ENCODE measurements at regions of chr14 and their contacts with region 1.

Region 1: DNA sequence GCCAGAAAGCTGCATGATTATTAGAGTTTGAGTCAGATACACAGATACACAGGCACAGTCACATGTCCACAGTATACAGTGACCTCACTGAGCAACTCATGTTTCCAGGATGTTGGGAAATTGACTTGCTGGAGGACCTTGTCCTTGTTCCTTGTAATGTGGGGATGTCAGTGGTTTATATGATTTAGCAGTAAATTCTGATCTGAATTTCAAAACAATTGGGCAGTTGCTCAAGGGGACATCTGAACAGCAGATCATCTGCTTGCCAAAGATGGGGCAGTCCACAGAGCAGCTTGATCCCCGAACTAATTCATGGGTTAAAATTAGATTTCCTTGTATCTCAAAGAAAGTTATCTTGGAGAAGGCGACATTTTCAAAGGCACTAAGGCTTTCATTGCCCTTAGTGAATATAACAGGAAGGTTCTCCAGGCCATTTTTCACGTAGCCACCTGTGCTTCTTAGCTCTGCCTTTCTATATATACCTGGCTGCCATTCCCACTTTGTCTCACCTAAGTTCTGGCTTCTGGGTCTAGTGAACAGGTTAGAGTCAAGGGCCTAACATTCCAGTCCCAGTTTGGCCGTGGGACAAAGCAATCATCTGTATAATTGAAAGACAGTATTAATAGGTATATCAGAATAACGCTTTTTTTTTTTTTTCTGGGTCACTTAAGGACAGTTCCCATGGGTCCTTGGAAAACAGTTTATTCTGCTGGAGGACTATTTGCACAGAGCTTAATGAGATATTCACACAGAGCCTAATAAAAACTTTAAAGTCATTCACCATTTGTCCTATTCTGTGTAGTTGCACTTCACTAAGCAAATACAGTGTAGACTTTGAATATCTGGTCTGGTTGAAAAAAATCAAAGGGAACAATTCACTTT is 64.9 kb upstream of the STRN3 start:
- DNase-seq: peak in 1 of 2 donors; percentile 82
- H3K4me3 ChIP-seq: no peak overlapping the region
- H3K27ac ChIP-seq: peak overlapping the region; percentile 61 to 72
- H3K4me1 ChIP-seq: peaks cover 0 to 18% (median 2%) of the 10 kb centered on the region in 4 donors
- H3K27me3 ChIP-seq: no peaks in the 10 kb centered on the region
- CTCF ChIP-seq: no peak

Region 2: GRCh38 chr14:31142455-31143087 is 51.4 kb after region 1 on chr14:
- intact Hi-C with region 1: loop called (anchors 10 kb)
- DNase-seq: no peak
- H3K4me3 ChIP-seq: no peak overlapping the region
- H3K27ac ChIP-seq: no peak overlapping the region
- H3K4me1 ChIP-seq: no peaks in the 10 kb centered on the region
- H3K27me3 ChIP-seq: no peaks in the 10 kb centered on the region
- CTCF ChIP-seq: no peak

Measured in tibial artery (tissue), 4 donors.